Activated CD4-positive, alpha-beta T cell treated with anti-CD3 and anti-CD28 coated beads for 36 hours (primary cell): ENCODE measurements at regions of chr11 and their contacts with region 1.

Region 1: DNA sequence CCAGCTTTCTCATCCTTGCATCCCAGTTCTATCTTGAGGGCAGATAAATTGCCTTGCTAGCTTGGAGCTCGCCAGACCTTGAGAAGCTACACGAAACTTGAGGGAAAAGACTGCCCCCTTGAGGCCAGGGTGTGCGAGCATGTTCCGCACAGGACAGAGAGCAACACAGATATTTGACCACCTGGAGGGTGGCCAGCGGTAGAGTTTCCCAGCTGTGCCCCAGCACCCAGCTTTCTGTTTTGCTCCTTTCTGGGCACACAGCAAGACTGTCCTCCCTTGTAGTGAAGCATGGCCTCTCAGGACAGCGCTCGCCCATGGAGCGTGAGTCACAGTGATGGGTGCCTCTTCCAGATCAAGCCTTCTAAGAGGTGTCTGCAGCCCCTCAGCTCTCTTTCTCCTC is 23.5 kb downstream of the SPATA19 start:
- DNase-seq: peak; percentile 66
- ATAC-seq: peak; percentile 44
- H3K4me3 Mint-ChIP-seq: no peak overlapping the region
- H3K27ac Mint-ChIP-seq: no peak overlapping the region
- H3K4me1 Mint-ChIP-seq: no peaks in the 10 kb centered on the region
- H3K27me3 Mint-ChIP-seq: peaks cover 2% of the 10 kb centered on the region

Region 2: DNA sequence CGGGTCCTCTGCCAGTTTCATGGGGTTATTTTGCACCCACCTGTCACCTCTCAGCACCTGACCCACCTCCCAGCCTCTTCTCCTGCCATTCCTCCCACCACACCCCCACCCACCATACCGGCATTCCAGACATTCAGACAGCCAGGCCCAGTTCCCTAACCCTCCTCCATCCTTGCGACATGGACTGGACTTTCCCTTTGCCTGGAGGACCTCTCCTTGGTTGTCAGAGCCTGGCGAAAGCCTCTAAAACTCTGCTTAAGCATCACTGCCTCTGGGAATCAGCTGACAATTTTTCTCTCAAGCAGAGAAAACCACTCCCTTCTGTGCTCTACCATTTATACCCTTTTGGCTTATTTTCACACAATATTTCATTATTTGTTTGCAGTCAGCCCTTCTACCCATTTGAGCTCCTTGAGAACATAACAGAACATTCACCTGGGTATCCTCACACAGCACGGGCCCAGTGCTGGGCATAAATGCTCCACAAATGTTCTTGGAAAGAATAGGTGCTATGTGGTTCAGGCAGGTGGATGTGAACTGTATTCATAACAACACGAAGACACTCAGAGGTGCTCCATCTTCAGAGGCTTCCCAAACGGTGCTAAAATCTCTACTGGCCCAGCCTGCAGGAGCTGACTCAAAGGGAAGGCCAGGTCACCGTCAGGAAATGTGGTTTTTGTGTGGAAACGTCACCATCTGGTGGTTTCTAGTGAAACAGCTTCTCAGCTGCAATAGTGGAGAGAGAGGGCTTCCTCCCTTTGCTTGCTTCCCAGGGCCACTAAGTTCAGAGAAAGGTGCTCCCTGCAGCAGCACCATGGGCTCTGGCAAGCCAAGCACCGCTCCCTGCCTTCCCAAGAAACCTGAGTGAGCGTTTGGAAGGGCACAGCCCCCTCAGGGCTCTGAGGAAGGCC is 13.2 kb after region 1 on chr11:
- CTCF ChIA-PET with region 1: interaction called, 18 read pairs
- POLR2A ChIA-PET with region 1: no interaction called
- intact Hi-C with region 1: no loop called
- DNase-seq: peak; percentile 78
- ATAC-seq: peak; percentile 85
- H3K4me3 Mint-ChIP-seq: no peak overlapping the region
- H3K27ac Mint-ChIP-seq: peak overlapping the region; percentile 10
- H3K4me1 Mint-ChIP-seq: peaks cover 11% of the 10 kb centered on the region
- H3K27me3 Mint-ChIP-seq: peaks cover 11% of the 10 kb centered on the region

Region 3: DNA sequence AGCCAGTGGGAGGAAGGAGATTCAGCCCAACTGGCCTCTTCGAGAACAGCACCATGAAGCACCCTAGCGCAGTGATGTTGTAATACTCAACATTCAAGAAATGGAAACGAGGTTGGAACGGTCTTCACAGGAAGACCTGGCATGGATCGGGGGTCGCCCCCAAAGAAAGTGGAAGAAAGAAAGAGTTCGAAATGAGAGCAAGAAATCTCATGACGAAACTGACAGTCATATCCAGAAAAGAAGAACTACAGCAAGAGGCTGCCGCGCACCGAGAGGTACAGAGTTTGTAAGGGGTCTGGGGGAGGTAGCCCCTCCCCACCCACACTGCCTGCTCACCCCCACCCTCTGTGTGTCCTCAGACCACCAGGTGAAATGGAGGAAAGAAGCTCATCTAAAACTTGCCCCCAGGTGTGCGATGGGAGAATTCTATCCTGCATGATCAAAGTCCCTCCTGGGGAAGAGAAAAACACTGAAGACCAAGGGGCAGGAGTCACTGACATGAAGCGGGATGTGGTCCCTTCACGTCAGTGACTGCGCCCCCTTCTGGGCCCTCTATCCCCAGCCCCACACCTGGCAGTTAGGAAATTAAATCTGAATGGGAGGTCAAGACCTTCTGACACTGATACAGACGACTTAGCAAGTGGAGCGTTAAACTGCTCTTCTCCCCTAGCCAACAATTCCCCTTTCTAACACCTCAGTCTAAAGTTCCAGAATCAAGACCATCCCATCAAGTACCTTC is 76.4 kb after region 1 on chr11:
- CTCF ChIA-PET with region 1: no interaction called
- POLR2A ChIA-PET with region 1: no interaction called
- intact Hi-C with region 1: no loop called
- DNase-seq: no peak
- ATAC-seq: no peak
- H3K4me3 Mint-ChIP-seq: no peak overlapping the region
- H3K27ac Mint-ChIP-seq: no peak overlapping the region
- H3K4me1 Mint-ChIP-seq: peaks cover 2% of the 10 kb centered on the region
- H3K27me3 Mint-ChIP-seq: no peaks in the 10 kb centered on the region